A549 (cell line): ENCODE measurements at regions of chr14 and their contacts with region 1.

Region 1: GRCh38 chr14:105480952-105481801 is 5.5 kb upstream of the CRIP1 start:
- DNase-seq: peak; percentile 86 to 95
- ATAC-seq: peak; percentile 41 to 70
- H3K4me3 ChIP-seq: peak overlapping the region; percentile 48
- H3K27ac ChIP-seq: peak overlapping the region; percentile 99 to 100
- H3K4me1 ChIP-seq: peaks cover 90% of the 10 kb centered on the region
- CTCF ChIP-seq: peak; percentile 96
- EP300 ChIP-seq: no peak
- POLR2A ChIP-seq: peak; percentile 61
- RAD21 ChIP-seq: peak; percentile 72

Region 2: DNA sequence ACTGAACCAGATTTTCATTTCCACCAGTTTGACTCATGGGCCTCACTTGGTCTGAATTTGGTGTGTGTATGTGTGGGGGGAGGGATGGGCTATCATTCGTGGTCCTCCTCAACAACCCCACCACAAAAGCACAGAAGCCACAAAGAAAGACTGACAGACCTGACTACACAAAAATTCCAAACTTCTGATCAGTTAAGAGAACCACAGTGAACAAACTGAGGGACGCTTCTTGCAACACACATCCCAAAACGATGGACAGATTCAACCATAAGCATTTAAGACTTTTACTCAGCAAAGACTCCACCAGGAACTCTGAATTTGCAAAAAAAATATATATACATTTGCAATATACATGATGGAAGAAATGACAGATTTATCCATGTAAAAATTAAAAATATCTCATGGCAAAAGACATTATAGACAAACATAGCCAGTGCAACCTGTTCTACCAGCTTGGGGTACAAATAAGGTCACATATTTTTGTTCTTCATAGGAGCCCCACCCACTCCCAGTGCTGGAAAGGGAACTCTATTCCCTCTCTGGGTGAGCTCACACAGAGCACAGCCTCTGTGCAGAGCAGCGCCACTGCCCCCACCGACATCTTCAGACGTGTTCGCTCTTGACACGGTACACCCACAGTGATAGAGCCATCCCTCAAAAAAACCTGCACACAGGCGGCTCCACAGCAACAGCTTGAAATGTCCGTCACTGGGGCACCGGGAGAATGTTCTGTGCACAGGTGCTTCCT is 362.3 kb before region 1 on chr14:
- CTCF ChIA-PET with region 1: no interaction called
- POLR2A ChIA-PET with region 1: no interaction called
- DNase-seq: no peak
- ATAC-seq: no peak
- H3K4me3 ChIP-seq: no peak overlapping the region
- H3K27ac ChIP-seq: no peak overlapping the region
- H3K4me1 ChIP-seq: no peaks in the 10 kb centered on the region
- CTCF ChIP-seq: no peak
- EP300 ChIP-seq: no peak
- POLR2A ChIP-seq: no peak
- RAD21 ChIP-seq: no peak

Region 3: DNA sequence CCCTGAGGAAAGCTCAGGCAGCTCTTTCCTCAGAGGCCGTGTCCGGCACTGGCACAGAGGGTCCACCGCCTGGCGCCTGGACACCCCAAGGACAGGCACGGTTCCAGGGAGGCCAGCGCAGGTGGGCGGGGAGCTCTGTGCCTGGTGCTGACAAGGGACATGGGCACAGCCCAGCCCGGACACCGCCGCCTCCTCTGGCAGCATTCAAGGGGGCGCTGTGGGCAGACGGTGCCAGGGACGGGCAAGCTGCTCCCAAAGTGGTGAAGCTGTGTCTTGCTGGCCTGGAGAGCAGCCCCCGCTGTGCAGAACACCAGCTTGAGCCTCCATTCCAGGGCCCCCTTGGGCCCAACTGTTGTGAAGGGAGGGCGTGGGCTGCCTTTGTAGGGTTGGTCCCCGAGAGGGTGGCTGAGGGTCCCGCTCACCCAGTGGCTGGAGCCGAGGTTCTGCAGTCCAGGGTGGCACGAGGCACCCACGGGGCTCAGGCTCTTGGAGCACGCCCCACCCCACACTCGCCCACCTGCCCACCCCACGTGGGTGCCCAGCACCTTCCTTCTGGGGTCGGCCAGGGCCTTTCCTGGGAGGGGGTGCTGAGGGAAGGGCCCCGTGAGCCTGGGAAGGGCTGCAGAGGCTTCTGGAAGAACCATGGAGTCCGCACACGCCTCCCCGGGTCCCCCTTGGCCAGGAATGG is 112.1 kb before region 1 on chr14:
- CTCF ChIA-PET with region 1: interaction called, 17 read pairs
- POLR2A ChIA-PET with region 1: interaction called, 3 read pairs
- DNase-seq: no peak
- ATAC-seq: no peak
- H3K4me3 ChIP-seq: no peak overlapping the region
- H3K27ac ChIP-seq: no peak overlapping the region
- H3K4me1 ChIP-seq: no peaks in the 10 kb centered on the region
- CTCF ChIP-seq: no peak
- EP300 ChIP-seq: no peak
- POLR2A ChIP-seq: no peak
- RAD21 ChIP-seq: no peak

Region 4: GRCh38 chr14:105430535-105430934 is 50.6 kb before region 1 on chr14:
- CTCF ChIA-PET with region 1: interaction called, 18 read pairs
- POLR2A ChIA-PET with region 1: interaction called, 3 read pairs
- DNase-seq: peak in 1 of 2 experiments; percentile 36
- ATAC-seq: peak in 1 of 2 experiments; percentile 20; a peak in 1 of 6 replicates
- H3K4me3 ChIP-seq: no peak overlapping the region
- H3K27ac ChIP-seq: peak overlapping the region in 1 of 2 experiments; percentile 39; a peak in 3 of 6 replicates
- H3K4me1 ChIP-seq: peaks cover 23% of the 10 kb centered on the region
- CTCF ChIP-seq: no peak
- EP300 ChIP-seq: no peak
- POLR2A ChIP-seq: no peak
- RAD21 ChIP-seq: no peak

Region 5: DNA sequence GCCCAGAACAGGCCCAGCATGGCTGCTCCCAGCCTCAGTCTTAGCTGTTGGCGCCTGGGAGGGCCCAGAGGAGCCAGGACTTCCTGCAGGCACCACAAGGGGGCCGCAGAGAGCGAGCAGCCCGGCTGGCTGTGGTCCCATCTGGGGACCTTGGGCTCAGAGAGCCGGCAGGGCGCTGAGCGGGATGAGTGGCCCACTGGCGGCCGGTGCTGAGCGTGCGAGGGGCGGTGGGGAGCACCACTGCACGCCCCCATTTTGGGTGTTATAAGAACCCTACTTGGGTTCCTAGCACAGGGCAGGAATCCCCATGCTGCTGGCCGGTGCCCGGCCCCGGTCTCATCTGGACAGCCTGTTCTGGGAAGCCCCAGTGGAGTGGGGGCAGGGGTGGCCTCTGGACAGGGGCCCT is 32.5 kb before region 1 on chr14:
- CTCF ChIA-PET with region 1: interaction called, 29 read pairs
- POLR2A ChIA-PET with region 1: interaction called, 5 read pairs
- DNase-seq: peak; percentile 67 to 87
- ATAC-seq: peak; percentile 83 to 93
- H3K4me3 ChIP-seq: no peak overlapping the region
- H3K27ac ChIP-seq: peak overlapping the region in 1 of 2 experiments; percentile 29; a peak in 3 of 6 replicates
- H3K4me1 ChIP-seq: 0 out of 3 replicates have a peak, but pooled peaks cover 6% of the 10 kb centered on the region
- CTCF ChIP-seq: peak; percentile 67
- EP300 ChIP-seq: no peak
- POLR2A ChIP-seq: no peak
- RAD21 ChIP-seq: peak; percentile 52 to 54

Region 6: GRCh38 chr14:105499256-105500030 is 18.3 kb after region 1 on chr14:
- CTCF ChIA-PET with region 1: interaction called, 29 read pairs
- POLR2A ChIA-PET with region 1: interaction called, 3 read pairs
- DNase-seq: no peak
- ATAC-seq: peak in 1 of 2 experiments; percentile 1; a peak in 3 of 6 replicates
- H3K4me3 ChIP-seq: no peak overlapping the region
- H3K27ac ChIP-seq: no peak overlapping the region
- H3K4me1 ChIP-seq: no peaks in the 10 kb centered on the region
- CTCF ChIP-seq: no peak
- EP300 ChIP-seq: no peak
- POLR2A ChIP-seq: no peak
- RAD21 ChIP-seq: no peak

Region 7: DNA sequence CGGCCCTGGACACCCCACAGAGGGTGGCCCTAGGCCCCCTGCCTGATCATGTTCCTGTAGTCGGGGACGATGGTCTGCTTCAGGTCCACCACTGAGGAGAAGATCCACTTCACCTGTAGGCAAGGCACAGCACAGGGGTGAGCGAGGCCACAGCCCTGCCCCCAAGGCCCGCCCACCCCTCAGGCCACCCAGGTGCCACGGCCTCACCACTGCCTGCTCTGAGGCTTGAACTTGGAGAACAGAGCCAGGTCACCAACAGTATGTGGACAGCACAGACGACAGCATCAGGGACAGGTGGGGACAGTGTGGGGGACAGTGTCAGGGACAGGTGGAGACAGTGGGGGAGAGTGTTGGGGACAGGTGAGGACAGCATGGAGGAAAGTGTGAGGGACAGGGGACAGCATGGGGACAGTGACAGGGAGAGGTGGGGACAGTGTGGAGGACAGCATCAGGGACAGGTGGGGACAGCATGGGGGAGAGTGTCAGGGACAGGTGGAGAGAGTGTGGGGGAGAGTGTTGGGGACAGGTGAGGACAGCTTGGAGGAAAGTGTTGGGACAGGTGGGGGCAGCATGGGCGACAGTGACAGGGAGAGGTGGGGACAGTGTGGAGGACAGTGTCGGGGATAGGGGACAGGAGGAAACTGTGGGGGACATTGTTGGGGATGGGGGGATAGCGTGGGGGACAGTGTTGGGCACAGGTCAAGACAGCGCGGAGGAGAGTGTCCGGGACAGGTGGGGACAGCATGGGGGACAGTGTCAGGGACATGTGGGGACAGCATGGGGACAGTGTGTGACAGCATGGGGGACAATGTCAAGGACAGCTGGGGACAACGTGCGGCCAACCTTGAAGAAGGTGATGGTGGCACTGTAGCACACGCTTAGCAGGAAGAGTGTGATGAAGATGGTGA is 160.0 kb after region 1 on chr14:
- CTCF ChIA-PET with region 1: no interaction called
- POLR2A ChIA-PET with region 1: no interaction called
- DNase-seq: no peak
- ATAC-seq: no peak
- H3K4me3 ChIP-seq: no peak overlapping the region
- H3K27ac ChIP-seq: no peak overlapping the region
- H3K4me1 ChIP-seq: no peaks in the 10 kb centered on the region
- CTCF ChIP-seq: no peak
- EP300 ChIP-seq: no peak
- POLR2A ChIP-seq: no peak
- RAD21 ChIP-seq: no peak